ENCODE measurements at regions of chr14 and their contacts with region 1.

Region 1: GRCh38 chr14:39266871-39267591 is 33.3 kb downstream of the MIA2 start:
- DNase-seq: peak; percentile 53 to 92 (median 82)

Region 2: GRCh38 chr14:39025810-39026627 is 241.0 kb before region 1 on chr14:
- intact Hi-C with region 1: no loop called
- DNase-seq: no peak

Region 3: GRCh38 chr14:39174560-39175444 is 92.2 kb before region 1 on chr14 and contains the start of gene PNN:
- intact Hi-C with region 1: loop called (anchors 2 kb)
- DNase-seq: peak; percentile 95 to 99 (median 98)

Measured in head of caudate nucleus (tissue), 42 donors.